HepG2 (cell line): ENCODE measurements at regions of chr11 and their contacts with region 1.

Region 1: GRCh38 chr11:123429913-123430720 is at the start of gene GRAMD1B:
- DNase-seq: no peak
- ATAC-seq: peak; percentile 46; the same call in 2 of the 3 replicates
- H3K4me3 ChIP-seq: peak within 1 kb of the TSS in 1 of 3 experiments; percentile 37; a peak in 1 of 6 replicates
- H3K27ac ChIP-seq: no peak within 1 kb of the TSS
- H3K4me1 ChIP-seq: no peaks in the 10 kb centered on the region
- H3K27me3 ChIP-seq: peaks cover 6 to 39% of the 10 kb centered on the region in 2 experiments
- CTCF ChIP-seq: no peak
- EP300 ChIP-seq: no peak
- POLR2A ChIP-seq: no peak
- RAD21 ChIP-seq: no peak
- total RNA-seq, gene GRAMD1B: not detected in 2 replicates

Region 2: GRCh38 chr11:123316003-123316402 is 114.1 kb before region 1 on chr11:
- CTCF ChIA-PET with region 1: no interaction called
- POLR2A ChIA-PET with region 1: no interaction called
- in situ Hi-C with region 1: no loop called
- intact Hi-C with region 1: no loop called
- DNase-seq: no peak
- ATAC-seq: no peak
- H3K4me3 ChIP-seq: no peak overlapping the region
- H3K27ac ChIP-seq: no peak overlapping the region
- H3K4me1 ChIP-seq: no peaks in the 10 kb centered on the region
- H3K27me3 ChIP-seq: peaks cover 0 to 29% of the 10 kb centered on the region in 2 experiments; a peak in 3 of 5 replicates
- CTCF ChIP-seq: no peak
- EP300 ChIP-seq: no peak
- POLR2A ChIP-seq: no peak
- RAD21 ChIP-seq: no peak

Region 3: GRCh38 chr11:123416566-123416965 is 13.6 kb before region 1 on chr11:
- CTCF ChIA-PET with region 1: no interaction called
- POLR2A ChIA-PET with region 1: no interaction called
- in situ Hi-C with region 1: no loop called
- intact Hi-C with region 1: loop called (anchors 1 kb)
- DNase-seq: no peak
- ATAC-seq: no peak
- H3K4me3 ChIP-seq: no peak overlapping the region
- H3K27ac ChIP-seq: no peak overlapping the region
- H3K4me1 ChIP-seq: peaks cover 9% of the 10 kb centered on the region
- H3K27me3 ChIP-seq: no peaks in the 10 kb centered on the region; a peak in 1 of 5 replicates
- CTCF ChIP-seq: no peak
- EP300 ChIP-seq: no peak
- POLR2A ChIP-seq: no peak
- RAD21 ChIP-seq: no peak